ENCODE measurements at regions of chr12 and their contacts with region 1.

Region 1: GRCh38 chr12:42372154-42372791 is 46.3 kb downstream of the PPHLN1 start:
- DNase-seq: peak; percentile 58
- ATAC-seq: peak; percentile 95
- H3K4me3 ChIP-seq: no peak overlapping the region
- H3K27ac ChIP-seq: no peak overlapping the region
- H3K4me1 ChIP-seq: no peaks in the 10 kb centered on the region
- H3K27me3 ChIP-seq: no peaks in the 10 kb centered on the region
- CTCF ChIP-seq: peak; percentile 83
- EP300 ChIP-seq: no peak
- POLR2A ChIP-seq: no peak
- RAD21 ChIP-seq: peak; percentile 79

Region 2: DNA sequence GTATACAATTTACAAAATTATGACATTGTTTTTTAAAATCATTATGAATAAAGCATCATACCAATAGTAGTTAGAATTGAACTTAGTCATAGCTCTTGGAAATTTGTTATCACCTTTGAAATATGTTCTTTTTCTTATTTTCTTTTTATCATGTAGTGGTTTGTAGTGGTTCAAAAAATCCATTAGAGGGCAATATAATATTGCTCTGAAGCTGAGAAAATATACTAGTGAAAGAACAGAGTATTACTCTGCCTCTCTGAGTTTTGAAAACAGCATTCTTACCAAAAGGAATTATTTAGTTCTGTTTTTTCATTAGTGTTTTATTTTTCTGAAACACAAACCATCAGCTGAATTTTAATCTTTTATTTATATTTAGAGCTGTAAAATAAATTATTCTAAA is 1108.0 kb before region 1 on chr12:
- CTCF ChIA-PET with region 1: no interaction called
- POLR2A ChIA-PET with region 1: no interaction called
- in situ Hi-C with region 1: no loop called
- intact Hi-C with region 1: loop called (anchors 5 kb)
- DNase-seq: peak; percentile 3
- ATAC-seq: no peak
- H3K4me3 ChIP-seq: no peak overlapping the region
- H3K27ac ChIP-seq: no peak overlapping the region
- H3K4me1 ChIP-seq: no peaks in the 10 kb centered on the region
- H3K27me3 ChIP-seq: no peaks in the 10 kb centered on the region
- CTCF ChIP-seq: no peak
- EP300 ChIP-seq: no peak
- POLR2A ChIP-seq: no peak
- RAD21 ChIP-seq: no peak

Region 3: GRCh38 chr12:41277116-41277945 is 1094.9 kb before region 1 on chr12:
- CTCF ChIA-PET with region 1: no interaction called
- POLR2A ChIA-PET with region 1: no interaction called
- in situ Hi-C with region 1: no loop called
- intact Hi-C with region 1: loop called (anchors 5 kb)
- DNase-seq: peak; percentile 26
- ATAC-seq: peak; percentile 54; the same call in 2 of the 3 replicates
- H3K4me3 ChIP-seq: no peak overlapping the region
- H3K27ac ChIP-seq: no peak overlapping the region
- H3K4me1 ChIP-seq: no peaks in the 10 kb centered on the region
- H3K27me3 ChIP-seq: no peaks in the 10 kb centered on the region
- CTCF ChIP-seq: peak; percentile 75
- EP300 ChIP-seq: no peak
- POLR2A ChIP-seq: no peak
- RAD21 ChIP-seq: peak; percentile 54; the same call in 1 of the 2 replicates

Region 4: GRCh38 chr12:41998436-41998835 is 373.8 kb before region 1 on chr12:
- CTCF ChIA-PET with region 1: no interaction called
- POLR2A ChIA-PET with region 1: no interaction called
- in situ Hi-C with region 1: no loop called
- intact Hi-C with region 1: no loop called
- DNase-seq: no peak
- ATAC-seq: no peak
- H3K4me3 ChIP-seq: no peak overlapping the region
- H3K27ac ChIP-seq: no peak overlapping the region
- H3K4me1 ChIP-seq: no peaks in the 10 kb centered on the region
- H3K27me3 ChIP-seq: no peaks in the 10 kb centered on the region
- CTCF ChIP-seq: no peak
- EP300 ChIP-seq: no peak
- POLR2A ChIP-seq: no peak
- RAD21 ChIP-seq: no peak

Region 5: DNA sequence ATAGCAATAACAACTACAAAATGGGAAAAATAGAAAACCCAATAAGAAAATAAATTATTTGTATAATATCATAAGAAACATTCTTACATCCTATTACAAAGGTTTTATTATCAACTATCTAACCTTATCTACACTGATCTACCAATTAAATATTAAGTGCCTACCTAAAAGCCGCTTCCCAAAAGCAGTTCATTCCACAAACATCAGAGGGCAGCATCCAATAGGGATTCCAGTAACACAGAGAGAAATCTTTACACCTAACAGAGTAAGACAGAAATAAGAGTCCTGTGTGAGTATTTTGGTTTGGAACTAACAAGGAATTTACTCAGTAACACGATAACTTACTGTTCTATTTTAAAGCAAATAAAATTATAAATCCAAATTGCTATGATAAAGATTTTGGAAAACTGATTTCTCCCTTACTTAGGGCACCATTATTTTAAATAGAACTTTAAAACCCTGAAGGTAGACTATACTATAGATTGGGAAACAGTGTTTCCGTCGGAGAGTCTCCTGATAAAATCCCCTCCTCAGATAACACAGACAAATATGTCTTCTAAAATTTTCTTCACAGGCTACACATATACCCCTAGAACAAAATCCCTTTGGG is 242.6 kb before region 1 on chr12:
- CTCF ChIA-PET with region 1: interaction called, 21 read pairs
- POLR2A ChIA-PET with region 1: no interaction called
- in situ Hi-C with region 1: no loop called
- intact Hi-C with region 1: loop called (anchors 1 kb)
- DNase-seq: peak; percentile 63
- ATAC-seq: peak; percentile 70
- H3K4me3 ChIP-seq: no peak overlapping the region
- H3K27ac ChIP-seq: no peak overlapping the region
- H3K4me1 ChIP-seq: peaks cover 15% of the 10 kb centered on the region
- H3K27me3 ChIP-seq: no peaks in the 10 kb centered on the region
- CTCF ChIP-seq: peak; percentile 72
- EP300 ChIP-seq: no peak
- POLR2A ChIP-seq: no peak
- RAD21 ChIP-seq: peak; percentile 76

Region 6: GRCh38 chr12:42296503-42297109 is 75.7 kb before region 1 on chr12:
- CTCF ChIA-PET with region 1: no interaction called
- POLR2A ChIA-PET with region 1: no interaction called
- in situ Hi-C with region 1: no loop called
- intact Hi-C with region 1: loop called (anchors 1 kb)
- DNase-seq: peak; percentile 50
- ATAC-seq: peak; percentile 57; the same call in 2 of the 3 replicates
- H3K4me3 ChIP-seq: no peak overlapping the region
- H3K27ac ChIP-seq: no peak overlapping the region
- H3K4me1 ChIP-seq: peaks cover 8% of the 10 kb centered on the region; the same call in 1 of the 2 replicates
- H3K27me3 ChIP-seq: no peaks in the 10 kb centered on the region; a peak in 1 of 5 replicates
- CTCF ChIP-seq: peak; percentile 62
- EP300 ChIP-seq: no peak
- POLR2A ChIP-seq: no peak
- RAD21 ChIP-seq: no peak

Region 7: GRCh38 chr12:42332301-42333285 is 39.7 kb before region 1 on chr12:
- CTCF ChIA-PET with region 1: no interaction called
- POLR2A ChIA-PET with region 1: no interaction called
- in situ Hi-C with region 1: no loop called
- intact Hi-C with region 1: loop called (anchors 2 kb)
- DNase-seq: peak; percentile 34
- ATAC-seq: peak; percentile 51
- H3K4me3 ChIP-seq: no peak overlapping the region
- H3K27ac ChIP-seq: no peak overlapping the region
- H3K4me1 ChIP-seq: peaks cover 45% of the 10 kb centered on the region
- H3K27me3 ChIP-seq: no peaks in the 10 kb centered on the region
- CTCF ChIP-seq: peak; percentile 52
- EP300 ChIP-seq: no peak
- POLR2A ChIP-seq: no peak
- RAD21 ChIP-seq: 0 out of 2 replicates have a peak, but pooled peaks have one; percentile 26